ENCODE measurements at regions of chr12 and their contacts with region 1.

Region 1: DNA sequence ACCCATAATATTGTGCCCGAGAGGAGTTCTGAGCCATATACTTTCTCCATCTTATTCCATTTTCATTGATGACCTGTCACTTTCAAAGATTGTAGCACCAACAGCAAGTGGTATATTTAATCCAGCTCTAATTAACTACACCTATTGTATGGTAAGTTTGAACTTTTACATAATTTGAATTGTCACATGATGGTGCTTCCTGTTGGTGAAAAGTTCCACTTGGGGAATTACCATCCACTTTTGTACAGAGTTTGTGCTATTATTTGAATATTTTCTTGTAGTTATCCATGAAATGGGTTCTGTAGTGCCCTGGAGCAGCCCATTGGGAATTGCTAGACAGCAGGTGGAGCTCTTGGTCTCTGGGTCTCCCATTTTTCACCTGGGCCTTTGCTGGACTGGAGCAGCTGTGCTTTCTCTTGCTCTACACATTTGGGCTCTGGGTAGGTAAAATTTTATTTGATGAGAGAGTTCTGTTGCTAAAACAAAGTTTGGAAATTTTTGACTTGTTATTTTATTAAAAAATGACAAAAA is 3.0 kb downstream of the SMCO3 start:
- DNase-seq: peak; percentile 35
- ATAC-seq: peak; percentile 28
- H3K4me3 ChIP-seq: no peak overlapping the region
- H3K4me3 Mint-ChIP-seq: peak overlapping the region; percentile 68
- H3K27ac ChIP-seq: no peak overlapping the region
- H3K27ac Mint-ChIP-seq: peak overlapping the region; percentile 50
- H3K4me1 ChIP-seq: peaks cover 9 to 16% of the 10 kb centered on the region in 2 donors
- H3K4me1 Mint-ChIP-seq: peaks cover 13% of the 10 kb centered on the region
- H3K27me3 ChIP-seq: no peaks in the 10 kb centered on the region
- H3K27me3 Mint-ChIP-seq: no peaks in the 10 kb centered on the region
- CTCF ChIP-seq: no peak

Region 2: GRCh38 chr12:15220994-15221885 is 410.2 kb after region 1 on chr12 and contains the start of gene RERG:
- CTCF ChIA-PET with region 1: interaction called, 10 read pairs
- POLR2A ChIA-PET with region 1: no interaction called
- intact Hi-C with region 1: no loop called
- DNase-seq: peak; percentile 77
- ATAC-seq: peak; percentile 98
- H3K4me3 ChIP-seq: peak within 1 kb of the TSS in 4 of 5 experiments; percentile 29 to 49 (median 41)
- H3K4me3 Mint-ChIP-seq: peak within 1 kb of the TSS; percentile 79
- H3K27ac ChIP-seq: no peak within 1 kb of the TSS
- H3K27ac Mint-ChIP-seq: no peak within 1 kb of the TSS
- H3K4me1 ChIP-seq: peaks cover 11 to 16% of the 10 kb centered on the region in 2 donors
- H3K4me1 Mint-ChIP-seq: peaks cover 14% of the 10 kb centered on the region
- H3K27me3 ChIP-seq: peaks cover 0 to 39% (median 34%) of the 10 kb centered on the region in 4 experiments
- H3K27me3 Mint-ChIP-seq: peaks cover 44% of the 10 kb centered on the region
- CTCF ChIP-seq: peak; percentile 95
- total RNA-seq, gene RERG: not detected in 2 replicates